MCF 10A (cell line): ENCODE measurements at regions of chr18 and their contacts with region 1.

Region 1: GRCh38 chr18:54983041-54983686 is 23.9 kb upstream of the CCDC68 start:
- DNase-seq: peak; percentile 73
- H3K4me3 Mint-ChIP-seq: no peak overlapping the region
- H3K27ac Mint-ChIP-seq: no peak overlapping the region
- H3K4me1 Mint-ChIP-seq: no peaks in the 10 kb centered on the region
- H3K27me3 Mint-ChIP-seq: no peaks in the 10 kb centered on the region
- CTCF ChIP-seq: peak; percentile 74

Region 2: GRCh38 chr18:54558609-54559585 is 424.3 kb before region 1 on chr18:
- CTCF ChIA-PET with region 1: interaction called, 3 read pairs
- POLR2A ChIA-PET with region 1: no interaction called
- intact Hi-C with region 1: loop called (anchors 2 kb)
- DNase-seq: peak; percentile 60
- H3K4me3 Mint-ChIP-seq: no peak overlapping the region
- H3K27ac Mint-ChIP-seq: no peak overlapping the region
- H3K4me1 Mint-ChIP-seq: no peaks in the 10 kb centered on the region
- H3K27me3 Mint-ChIP-seq: no peaks in the 10 kb centered on the region
- CTCF ChIP-seq: peak; percentile 63

Region 3: GRCh38 chr18:54679318-54680149 is 303.6 kb before region 1 on chr18:
- CTCF ChIA-PET with region 1: interaction called, 54 read pairs
- POLR2A ChIA-PET with region 1: interaction called, 5 read pairs
- intact Hi-C with region 1: loop called (anchors 1 kb)
- DNase-seq: peak; percentile 82
- H3K4me3 Mint-ChIP-seq: no peak overlapping the region
- H3K27ac Mint-ChIP-seq: no peak overlapping the region
- H3K4me1 Mint-ChIP-seq: peaks cover 7% of the 10 kb centered on the region
- H3K27me3 Mint-ChIP-seq: no peaks in the 10 kb centered on the region
- CTCF ChIP-seq: peak; percentile 66

Region 4: DNA sequence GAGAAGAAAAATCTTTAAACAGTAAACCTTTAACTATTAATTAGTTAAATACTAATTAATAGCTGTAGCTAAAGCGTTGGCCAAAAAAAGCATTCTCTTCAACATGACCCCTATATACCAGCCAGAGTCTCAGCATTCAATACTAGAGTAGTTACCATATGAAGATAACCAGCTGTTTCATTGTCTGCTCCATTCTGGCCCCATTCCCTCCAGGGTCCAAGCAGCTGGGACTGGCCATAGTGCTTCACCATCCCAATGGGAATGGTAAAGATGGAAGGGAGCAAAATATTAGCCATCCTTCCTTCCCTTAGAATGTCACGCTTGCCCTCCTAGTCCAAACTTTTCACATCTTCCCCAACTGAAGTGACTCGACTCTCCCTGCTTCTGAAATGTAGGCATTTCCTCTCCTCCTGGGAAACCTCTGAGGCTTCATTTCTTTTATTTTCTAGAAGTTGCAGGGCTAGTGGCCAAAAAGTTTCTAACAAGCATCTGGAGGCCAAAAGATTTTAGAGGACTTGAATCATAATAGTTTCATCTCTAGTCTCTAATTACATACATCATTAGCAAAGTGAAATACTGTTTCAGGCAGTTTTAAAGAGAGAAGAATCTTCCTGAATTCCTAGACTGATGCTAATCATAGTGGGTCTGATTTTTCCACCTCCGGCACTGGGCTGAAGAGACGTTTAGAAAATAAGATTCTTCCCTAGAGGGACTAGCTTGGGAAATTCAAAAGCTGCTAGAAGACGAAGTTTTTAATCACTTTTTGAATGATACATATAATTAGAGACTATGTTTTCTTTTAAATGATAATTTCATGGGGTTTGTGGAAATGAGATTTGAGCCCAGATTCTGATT is 76.6 kb before region 1 on chr18:
- CTCF ChIA-PET with region 1: no interaction called
- POLR2A ChIA-PET with region 1: no interaction called
- intact Hi-C with region 1: loop called (anchors 5 kb)
- DNase-seq: no peak
- H3K4me3 Mint-ChIP-seq: no peak overlapping the region
- H3K27ac Mint-ChIP-seq: no peak overlapping the region
- H3K4me1 Mint-ChIP-seq: no peaks in the 10 kb centered on the region
- H3K27me3 Mint-ChIP-seq: no peaks in the 10 kb centered on the region
- CTCF ChIP-seq: no peak